HEK293T (cell line): ENCODE measurements at regions of chr5 and their contacts with region 1.

Region 1: DNA sequence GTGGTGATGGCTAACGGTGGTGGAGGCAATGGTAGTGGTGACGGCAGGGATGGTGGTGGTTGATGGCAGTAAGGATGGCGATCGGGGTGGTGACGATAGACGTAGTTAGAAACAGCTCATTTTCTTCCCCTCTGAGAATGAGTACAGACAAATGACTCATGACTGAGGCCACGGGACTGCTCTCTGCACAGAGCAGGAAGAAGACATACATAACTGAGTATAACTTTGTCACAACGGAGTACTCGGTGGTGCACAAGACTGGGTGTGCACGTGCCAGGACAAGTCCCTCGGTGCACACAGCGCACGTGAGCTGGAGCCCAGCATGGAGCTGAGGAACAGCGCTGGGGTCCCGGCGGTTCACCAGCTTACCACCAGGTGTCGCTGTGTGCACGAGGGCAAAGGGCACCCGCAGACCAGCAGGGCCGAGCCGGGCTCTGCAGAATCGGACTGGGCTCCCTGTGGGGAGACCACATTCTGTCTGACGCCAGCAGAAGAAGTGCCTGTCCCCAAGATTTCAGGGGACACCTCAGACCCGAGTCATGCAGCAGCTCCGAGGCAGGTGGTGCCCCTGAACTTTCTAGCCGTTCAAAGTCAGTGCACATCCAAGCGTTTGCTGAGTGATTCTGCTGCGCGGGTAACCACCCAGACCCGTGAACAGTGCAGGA is 188.6 kb downstream of the FSTL4 start:
- DNase-seq: peak; percentile 83

Region 2: DNA sequence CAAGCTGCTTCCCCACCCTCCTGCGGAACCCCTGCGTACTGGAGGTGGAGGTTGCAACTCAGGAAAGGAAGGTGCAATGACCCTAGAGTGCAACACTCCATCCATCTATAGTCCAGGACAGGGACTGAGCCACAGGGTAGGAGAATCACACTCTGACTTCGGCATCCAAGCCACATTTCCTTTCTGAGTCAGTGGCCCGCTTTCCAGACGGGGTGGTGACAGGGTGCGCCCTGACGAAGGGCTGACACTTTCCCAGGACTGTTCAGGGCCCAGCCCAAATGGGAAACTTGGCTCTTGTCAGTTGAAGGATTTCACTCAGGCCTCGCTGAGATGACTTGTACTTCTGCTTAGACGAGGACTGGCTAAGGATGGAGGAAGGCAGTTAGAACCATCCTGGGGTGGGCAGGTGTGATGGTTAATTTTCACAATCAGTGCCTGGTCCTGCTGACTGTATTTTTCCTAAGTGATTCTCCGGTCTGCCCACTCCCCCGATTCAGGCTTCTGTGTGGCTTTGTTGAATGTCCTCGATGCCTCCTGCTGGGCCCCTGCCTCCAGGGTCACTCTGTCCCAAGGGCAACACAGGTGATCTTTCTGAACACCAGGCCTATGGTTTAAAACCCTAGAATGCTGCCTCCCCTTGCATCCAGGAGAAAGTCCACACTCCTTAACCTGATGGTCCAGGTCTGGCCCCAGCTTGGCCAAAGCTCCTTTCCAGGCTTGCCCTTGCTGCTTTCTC is 39.5 kb before region 1 on chr5:
- CTCF ChIA-PET with region 1: no interaction called
- POLR2A ChIA-PET with region 1: no interaction called
- DNase-seq: no peak

Region 3: GRCh38 chr5:133400831-133401351 is 22.9 kb before region 1 on chr5:
- CTCF ChIA-PET with region 1: interaction called, 11 read pairs
- POLR2A ChIA-PET with region 1: no interaction called
- DNase-seq: no peak

Region 4: DNA sequence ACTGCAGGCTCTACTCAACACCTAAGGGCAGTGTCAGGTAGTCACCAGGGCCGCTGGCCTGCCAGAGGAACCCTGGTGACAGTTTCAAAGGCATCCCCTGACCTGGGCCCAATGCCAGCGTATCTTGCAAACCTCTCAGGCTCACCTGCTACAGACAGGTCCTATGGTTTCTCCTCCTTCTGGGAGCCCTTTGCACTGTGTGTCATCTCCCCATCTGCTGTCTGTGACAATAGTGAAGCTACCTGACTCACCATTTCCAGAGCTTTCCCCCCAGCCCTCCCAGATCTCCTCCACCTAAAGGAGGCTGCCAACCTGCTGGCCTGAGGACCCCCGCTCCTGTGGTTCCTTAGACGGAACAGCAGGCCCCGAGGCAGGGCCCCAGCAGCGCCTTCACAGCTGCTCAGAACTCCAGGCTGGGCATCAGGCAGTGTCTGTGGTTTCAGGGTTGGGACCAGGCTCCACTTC is 14.5 kb before region 1 on chr5:
- CTCF ChIA-PET with region 1: interaction called, 11 read pairs
- POLR2A ChIA-PET with region 1: no interaction called
- DNase-seq: no peak

Region 5: DNA sequence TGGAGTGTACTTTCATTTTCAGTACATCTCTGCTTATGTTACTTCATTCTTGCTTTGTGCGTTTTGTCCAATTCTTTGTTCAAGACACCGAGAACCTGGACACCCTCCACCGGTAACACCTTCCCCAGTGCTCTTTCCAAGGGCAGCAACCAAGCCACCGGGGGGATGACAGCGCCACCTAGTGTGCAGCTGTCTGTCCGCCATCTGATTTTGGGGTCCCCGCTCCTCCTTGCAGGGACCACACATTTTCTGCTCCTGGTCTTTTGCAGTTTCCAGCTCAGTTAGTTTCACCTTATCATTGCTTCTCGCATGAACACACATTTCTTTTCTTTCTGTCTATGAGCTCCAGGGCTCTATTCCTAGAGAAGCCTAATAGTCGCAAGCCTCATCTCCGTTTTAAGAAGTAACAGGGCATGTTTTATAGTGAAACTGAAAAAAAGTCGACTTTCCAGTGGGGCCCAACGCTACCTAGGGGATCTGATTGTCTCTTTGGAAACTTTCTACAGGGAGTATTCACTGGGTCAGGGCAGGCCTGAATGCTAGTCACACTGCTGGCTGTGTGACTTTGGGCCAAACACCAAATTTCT is 36.5 kb after region 1 on chr5:
- CTCF ChIA-PET with region 1: interaction called, 24 read pairs
- POLR2A ChIA-PET with region 1: no interaction called
- DNase-seq: peak; percentile 68

Region 6: GRCh38 chr5:133478199-133478985 is 54.6 kb after region 1 on chr5:
- CTCF ChIA-PET with region 1: no interaction called
- POLR2A ChIA-PET with region 1: no interaction called
- DNase-seq: no peak

Region 7: DNA sequence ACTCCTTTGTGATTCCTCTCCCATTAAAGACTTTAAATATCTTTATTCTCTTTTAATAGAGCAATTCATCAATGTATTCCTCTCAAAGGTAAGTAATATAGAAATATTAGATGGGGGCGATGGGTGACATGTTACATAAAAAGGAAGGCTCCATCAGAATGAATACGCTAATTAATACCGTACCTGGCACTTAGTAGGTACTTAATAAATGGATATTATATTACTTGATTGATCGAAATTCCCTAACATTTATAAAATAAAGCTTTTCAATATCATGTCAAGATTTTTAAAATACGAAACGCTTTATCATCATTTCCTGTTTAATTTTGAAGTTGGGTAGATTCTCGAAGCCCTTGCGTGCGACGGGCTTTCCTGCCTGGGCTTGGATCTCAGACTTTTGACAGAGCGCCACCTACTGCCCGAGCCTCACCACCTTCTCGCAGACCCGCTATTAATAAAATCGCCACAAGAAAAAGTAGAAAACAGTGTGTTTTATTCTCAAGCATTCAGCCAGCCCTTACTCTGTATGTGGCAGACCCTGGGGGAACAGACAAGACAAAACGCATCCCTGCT is 445.3 kb after region 1 on chr5:
- CTCF ChIA-PET with region 1: interaction called, 15 read pairs
- POLR2A ChIA-PET with region 1: no interaction called
- DNase-seq: peak; percentile 77